ENCODE measurements at regions of chr20 and their contacts with region 1.

Region 1: DNA sequence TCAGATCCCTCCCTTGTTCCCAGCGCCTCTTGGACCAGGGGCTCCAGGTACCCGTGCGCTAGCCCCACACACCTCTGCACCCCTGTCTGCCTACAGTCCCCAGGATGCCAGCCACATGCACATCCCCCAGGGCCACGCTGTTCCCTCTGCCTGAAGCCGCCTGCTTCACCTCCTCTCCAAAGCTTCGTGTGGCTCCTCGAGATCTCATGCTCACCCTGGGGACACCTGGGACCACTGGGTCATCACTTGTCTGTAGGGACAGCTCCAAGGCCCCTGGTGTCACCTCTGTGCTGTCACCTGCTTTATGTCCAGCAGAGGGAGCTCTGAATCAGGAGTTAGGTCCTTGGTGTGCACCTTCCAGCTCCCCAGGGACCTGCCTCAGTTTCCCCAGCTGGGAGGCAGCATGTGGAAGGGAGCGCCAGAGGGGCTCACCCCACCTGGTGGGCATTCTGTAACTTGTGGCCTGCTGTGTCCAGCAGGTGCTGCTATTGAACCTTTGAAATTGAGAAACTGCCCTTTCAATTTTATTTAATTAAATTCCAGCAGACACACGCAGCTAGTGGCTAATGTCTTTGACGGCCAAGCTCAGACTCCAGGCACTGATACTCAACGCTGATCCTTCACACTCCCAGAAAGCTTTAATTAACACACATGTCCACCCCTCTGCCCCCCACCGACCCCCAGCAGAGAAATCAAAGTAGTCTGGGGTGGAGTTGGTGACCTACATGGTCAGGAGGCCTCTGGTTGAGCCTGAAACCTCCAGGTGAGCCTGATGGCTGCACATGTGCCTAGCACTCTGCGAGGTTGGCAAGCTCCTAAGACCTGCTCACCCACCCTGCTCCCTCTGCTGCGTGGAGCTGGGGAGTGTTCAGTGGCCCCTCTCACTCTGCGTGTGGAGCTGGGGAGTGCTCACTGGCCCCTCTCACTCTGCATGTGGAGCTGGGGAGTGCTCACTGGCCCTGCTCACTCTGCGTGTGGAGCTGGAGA is 7.6 kb upstream of the YTHDF1 start:
- DNase-seq: peak; percentile 76
- H3K4me3 ChIP-seq: no peak overlapping the region; a peak in 1 of 4 replicates
- H3K27ac ChIP-seq: no peak overlapping the region
- H3K4me1 ChIP-seq: peaks cover 0 to 17% of the 10 kb centered on the region in 2 experiments; a peak in 1 of 4 replicates
- H3K27me3 ChIP-seq: 0 out of 2 replicates have a peak, but pooled peaks cover 6% of the 10 kb centered on the region
- CTCF ChIP-seq: peak; percentile 81
- EP300 ChIP-seq: no peak
- RAD21 ChIP-seq: peak; percentile 70

Region 2: GRCh38 chr20:62937366-62938104 is 286.0 kb before region 1 on chr20:
- CTCF ChIA-PET with region 1: no interaction called
- POLR2A ChIA-PET with region 1: no interaction called
- DNase-seq: peak; percentile 97
- H3K4me3 ChIP-seq: peak overlapping the region; percentile 84 to 86
- H3K27ac ChIP-seq: peak overlapping the region; percentile 83 to 89
- H3K4me1 ChIP-seq: peaks cover 11 to 21% of the 10 kb centered on the region in 2 experiments
- H3K27me3 ChIP-seq: no peaks in the 10 kb centered on the region
- CTCF ChIP-seq: no peak
- EP300 ChIP-seq: no peak
- RAD21 ChIP-seq: no peak

Region 3: GRCh38 chr20:63101781-63102719 is 121.5 kb before region 1 on chr20:
- CTCF ChIA-PET with region 1: no interaction called
- POLR2A ChIA-PET with region 1: no interaction called
- DNase-seq: peak; percentile 67
- H3K4me3 ChIP-seq: peak overlapping the region; percentile 48 to 68
- H3K27ac ChIP-seq: no peak overlapping the region
- H3K4me1 ChIP-seq: no peaks in the 10 kb centered on the region; a peak in 1 of 4 replicates
- H3K27me3 ChIP-seq: no peaks in the 10 kb centered on the region; the same call in 1 of the 2 replicates
- CTCF ChIP-seq: no peak
- EP300 ChIP-seq: no peak
- RAD21 ChIP-seq: no peak

Region 4: GRCh38 chr20:63142933-63143332 is 80.6 kb before region 1 on chr20:
- CTCF ChIA-PET with region 1: no interaction called
- POLR2A ChIA-PET with region 1: no interaction called
- DNase-seq: no peak
- H3K4me3 ChIP-seq: no peak overlapping the region
- H3K27ac ChIP-seq: no peak overlapping the region
- H3K4me1 ChIP-seq: no peaks in the 10 kb centered on the region
- H3K27me3 ChIP-seq: peaks cover 47% of the 10 kb centered on the region
- CTCF ChIP-seq: no peak
- EP300 ChIP-seq: no peak
- RAD21 ChIP-seq: no peak

Region 5: GRCh38 chr20:63166688-63167375 is 56.7 kb before region 1 on chr20:
- CTCF ChIA-PET with region 1: no interaction called
- POLR2A ChIA-PET with region 1: no interaction called
- DNase-seq: no peak
- H3K4me3 ChIP-seq: no peak overlapping the region
- H3K27ac ChIP-seq: no peak overlapping the region
- H3K4me1 ChIP-seq: no peaks in the 10 kb centered on the region
- H3K27me3 ChIP-seq: peaks cover 19% of the 10 kb centered on the region; the same call in 1 of the 2 replicates
- CTCF ChIP-seq: no peak
- EP300 ChIP-seq: no peak
- RAD21 ChIP-seq: no peak

Region 6: DNA sequence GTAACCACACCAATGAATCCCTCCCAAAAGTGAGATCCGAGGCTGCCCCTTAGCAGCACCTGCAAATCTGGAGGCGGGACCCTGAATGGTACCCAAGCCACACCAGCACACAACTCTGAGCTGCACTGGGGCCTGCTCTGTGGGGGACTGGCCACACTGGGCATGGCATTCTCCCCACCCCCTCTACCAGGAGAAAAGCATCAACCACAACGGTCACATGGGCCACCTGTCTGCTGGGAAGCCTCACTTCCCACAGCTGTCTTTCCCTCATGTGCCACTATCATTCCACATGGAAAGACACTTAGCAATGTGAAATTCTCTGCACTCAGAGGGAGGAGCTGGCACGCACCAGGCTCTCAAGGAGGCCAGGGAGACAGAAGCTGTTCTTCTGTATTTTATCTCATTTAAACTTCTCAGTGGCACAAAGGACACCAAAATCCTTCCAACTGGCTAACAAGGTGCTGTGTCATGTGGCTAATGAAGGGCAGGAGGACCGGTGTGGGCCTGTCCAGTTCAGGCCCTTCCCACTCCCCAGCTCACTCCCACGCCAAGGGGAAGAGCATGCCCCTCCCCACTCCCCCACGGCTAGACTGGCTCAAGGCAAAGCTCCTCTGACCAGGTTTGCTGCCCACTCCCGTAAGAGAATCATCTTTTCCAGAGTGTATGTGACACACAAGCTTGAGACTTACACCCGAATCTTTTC is 26.6 kb before region 1 on chr20:
- CTCF ChIA-PET with region 1: interaction called, 16 read pairs
- POLR2A ChIA-PET with region 1: no interaction called
- DNase-seq: no peak
- H3K4me3 ChIP-seq: no peak overlapping the region
- H3K27ac ChIP-seq: no peak overlapping the region
- H3K4me1 ChIP-seq: peaks cover 2 to 6% of the 10 kb centered on the region in 2 experiments; a peak in 2 of 4 replicates
- H3K27me3 ChIP-seq: no peaks in the 10 kb centered on the region
- CTCF ChIP-seq: no peak
- EP300 ChIP-seq: no peak
- RAD21 ChIP-seq: no peak

Region 7: DNA sequence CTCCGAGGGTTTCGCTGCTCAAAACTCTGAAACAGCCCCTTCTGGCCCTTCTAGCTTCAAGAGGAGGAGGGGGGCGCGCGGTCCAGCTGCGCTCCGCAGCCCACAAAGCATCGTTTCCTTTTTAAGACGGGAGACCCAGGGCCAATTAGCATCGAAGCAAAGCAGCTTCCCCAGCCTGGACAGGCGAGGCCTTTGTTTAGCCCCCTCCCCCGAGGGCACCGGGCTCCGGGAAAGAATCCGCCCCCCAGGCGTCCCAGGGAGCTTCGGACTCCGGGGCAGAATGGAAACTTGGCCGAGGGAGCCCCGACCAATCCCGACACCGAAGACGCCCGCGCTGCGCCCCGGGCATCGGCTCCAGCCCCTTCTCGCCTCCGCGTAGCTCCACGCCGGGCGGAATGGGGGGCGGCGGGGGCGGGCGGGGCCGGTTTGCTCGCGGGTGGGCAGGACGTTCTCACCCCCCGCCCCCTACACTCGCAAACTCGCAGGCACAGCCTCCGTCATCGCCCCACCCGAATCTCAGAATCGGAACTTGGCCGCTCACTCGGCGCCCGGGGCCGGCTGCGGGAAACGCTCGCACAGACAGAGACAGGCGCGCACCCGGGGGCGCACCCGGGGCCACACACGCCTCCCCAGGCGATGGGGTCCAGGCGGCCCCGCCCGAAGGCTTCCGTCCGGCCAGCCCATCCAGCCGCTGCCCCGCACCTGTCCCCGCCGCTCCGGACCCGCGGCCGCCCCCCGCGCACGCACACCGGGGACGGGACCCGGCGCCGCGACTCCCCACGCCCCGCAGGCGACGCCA is 30.1 kb after region 1 on chr20:
- CTCF ChIA-PET with region 1: interaction called, 168 read pairs
- POLR2A ChIA-PET with region 1: no interaction called
- DNase-seq: peak; percentile 65
- H3K4me3 ChIP-seq: no peak overlapping the region; a peak in 1 of 4 replicates
- H3K27ac ChIP-seq: no peak overlapping the region
- H3K4me1 ChIP-seq: no peaks in the 10 kb centered on the region; a peak in 1 of 4 replicates
- H3K27me3 ChIP-seq: peaks cover 39% of the 10 kb centered on the region
- CTCF ChIP-seq: no peak
- EP300 ChIP-seq: no peak
- RAD21 ChIP-seq: no peak

Region 8: GRCh38 chr20:63272584-63273579 is 49.4 kb after region 1 on chr20 and contains the start of gene ARFGAP1:
- CTCF ChIA-PET with region 1: interaction called, 38 read pairs
- POLR2A ChIA-PET with region 1: interaction called, 4 read pairs
- DNase-seq: peak; percentile 99
- H3K4me3 ChIP-seq: peak within 1 kb of the TSS; percentile 87 to 92
- H3K27ac ChIP-seq: peak within 1 kb of the TSS; percentile 41 to 65; a peak in 3 of 4 replicates
- H3K4me1 ChIP-seq: peaks cover 0 to 20% of the 10 kb centered on the region in 2 experiments; a peak in 2 of 4 replicates
- H3K27me3 ChIP-seq: no peaks in the 10 kb centered on the region
- CTCF ChIP-seq: no peak
- EP300 ChIP-seq: no peak
- RAD21 ChIP-seq: no peak
- polyA plus RNA-seq, gene ARFGAP1: 72.7 and 77.0 TPM in 2 replicates

Region 9: DNA sequence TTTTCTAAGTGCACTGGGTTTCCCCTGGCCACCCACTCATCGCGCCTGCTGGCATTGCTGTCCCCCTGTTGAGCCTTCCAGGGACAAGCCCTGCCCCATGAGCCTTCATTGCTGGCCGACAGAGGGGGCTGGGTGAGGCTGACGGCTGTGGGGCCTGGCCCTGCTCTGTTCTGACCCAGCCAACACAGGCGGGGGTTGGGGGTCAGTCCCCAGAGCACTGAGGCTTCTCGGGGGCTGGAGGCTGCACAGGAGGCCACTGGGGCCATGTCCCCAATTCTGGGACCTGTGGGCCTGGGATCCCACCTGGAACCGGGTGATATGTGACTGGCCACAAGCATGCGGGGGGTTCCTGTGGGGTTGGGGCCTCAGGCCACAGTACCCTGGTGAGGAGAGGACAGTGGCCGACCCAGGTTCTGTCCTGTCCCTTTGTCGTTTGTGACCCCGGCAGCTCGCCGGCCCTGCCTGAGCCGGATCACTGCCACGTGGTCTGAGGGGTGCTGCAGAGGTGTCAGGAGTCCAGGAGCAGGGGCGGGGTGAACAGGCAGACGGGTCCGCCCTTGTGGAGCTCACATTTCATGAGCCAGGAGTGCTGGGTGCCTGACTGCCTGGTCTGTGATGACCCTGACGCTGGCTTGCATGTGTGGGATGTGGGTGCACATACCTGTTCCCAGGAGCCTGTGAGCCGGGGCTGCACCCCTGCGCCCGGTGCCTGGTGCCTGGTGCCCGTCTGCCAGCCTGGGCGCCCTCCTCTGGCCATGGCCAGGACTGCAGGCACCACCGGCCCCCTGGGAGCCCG is 67.4 kb after region 1 on chr20:
- CTCF ChIA-PET with region 1: interaction called, 47 read pairs
- POLR2A ChIA-PET with region 1: interaction called, 4 read pairs
- DNase-seq: peak; percentile 95
- H3K4me3 ChIP-seq: no peak overlapping the region
- H3K27ac ChIP-seq: no peak overlapping the region
- H3K4me1 ChIP-seq: no peaks in the 10 kb centered on the region; a peak in 1 of 4 replicates
- H3K27me3 ChIP-seq: peaks cover 6% of the 10 kb centered on the region; the same call in 1 of the 2 replicates
- CTCF ChIP-seq: peak; percentile 68
- EP300 ChIP-seq: no peak
- RAD21 ChIP-seq: peak; percentile 40